ENCODE measurements at regions of chr16 and their contacts with region 1.

Region 1: GRCh38 chr16:79601931-79602627 is 1.5 kb upstream of the MAF start:
- DNase-seq: peak; percentile 92
- H3K4me3 Mint-ChIP-seq: peak overlapping the region; percentile 96
- H3K27ac Mint-ChIP-seq: peak overlapping the region; percentile 98
- H3K4me1 Mint-ChIP-seq: peaks cover 38% of the 10 kb centered on the region
- H3K27me3 Mint-ChIP-seq: peaks cover 3% of the 10 kb centered on the region

Region 2: DNA sequence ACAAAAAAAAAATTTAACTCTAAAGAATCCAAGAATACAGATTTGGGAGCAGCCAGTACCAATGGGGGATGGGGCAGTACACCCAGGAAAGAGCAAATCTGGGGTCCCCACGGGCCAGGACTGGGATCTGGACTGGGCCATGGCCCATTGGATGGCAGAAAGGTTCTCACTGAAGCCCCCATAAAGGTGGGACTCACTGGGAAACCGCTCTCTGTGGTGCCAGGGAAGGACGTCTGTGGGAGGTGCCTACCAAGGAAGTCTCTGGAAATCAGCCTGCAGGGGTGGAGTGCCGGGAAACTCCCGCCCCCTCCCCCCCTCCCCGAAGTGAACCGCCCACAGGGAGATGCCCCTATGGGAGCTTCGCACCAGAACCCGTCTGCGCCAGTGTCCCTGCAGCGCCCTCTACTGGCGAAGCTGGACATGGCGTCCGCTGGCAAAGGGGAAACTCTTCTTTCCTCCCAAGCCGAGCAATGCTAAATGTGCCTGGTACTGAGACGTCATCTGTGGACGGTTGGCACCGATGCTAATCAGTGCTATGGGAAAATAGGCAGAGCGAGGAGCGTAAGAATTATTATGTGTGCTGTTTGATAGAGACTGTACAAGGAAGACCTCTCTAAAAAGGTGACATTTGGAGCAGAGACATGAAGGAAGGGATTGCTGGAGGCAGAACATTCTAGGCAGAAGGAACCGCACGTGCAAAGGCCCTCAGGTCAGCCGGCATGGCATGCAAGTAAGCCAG is 831.6 kb before region 1 on chr16:
- CTCF ChIA-PET with region 1: interaction called, 4 read pairs
- POLR2A ChIA-PET with region 1: interaction called, 14 read pairs
- intact Hi-C with region 1: loop called (anchors 2 kb)
- DNase-seq: peak; percentile 93
- H3K4me3 Mint-ChIP-seq: peak overlapping the region; percentile 65
- H3K27ac Mint-ChIP-seq: peak overlapping the region; percentile 87
- H3K4me1 Mint-ChIP-seq: peaks cover 80% of the 10 kb centered on the region
- H3K27me3 Mint-ChIP-seq: no peaks in the 10 kb centered on the region

Region 3: DNA sequence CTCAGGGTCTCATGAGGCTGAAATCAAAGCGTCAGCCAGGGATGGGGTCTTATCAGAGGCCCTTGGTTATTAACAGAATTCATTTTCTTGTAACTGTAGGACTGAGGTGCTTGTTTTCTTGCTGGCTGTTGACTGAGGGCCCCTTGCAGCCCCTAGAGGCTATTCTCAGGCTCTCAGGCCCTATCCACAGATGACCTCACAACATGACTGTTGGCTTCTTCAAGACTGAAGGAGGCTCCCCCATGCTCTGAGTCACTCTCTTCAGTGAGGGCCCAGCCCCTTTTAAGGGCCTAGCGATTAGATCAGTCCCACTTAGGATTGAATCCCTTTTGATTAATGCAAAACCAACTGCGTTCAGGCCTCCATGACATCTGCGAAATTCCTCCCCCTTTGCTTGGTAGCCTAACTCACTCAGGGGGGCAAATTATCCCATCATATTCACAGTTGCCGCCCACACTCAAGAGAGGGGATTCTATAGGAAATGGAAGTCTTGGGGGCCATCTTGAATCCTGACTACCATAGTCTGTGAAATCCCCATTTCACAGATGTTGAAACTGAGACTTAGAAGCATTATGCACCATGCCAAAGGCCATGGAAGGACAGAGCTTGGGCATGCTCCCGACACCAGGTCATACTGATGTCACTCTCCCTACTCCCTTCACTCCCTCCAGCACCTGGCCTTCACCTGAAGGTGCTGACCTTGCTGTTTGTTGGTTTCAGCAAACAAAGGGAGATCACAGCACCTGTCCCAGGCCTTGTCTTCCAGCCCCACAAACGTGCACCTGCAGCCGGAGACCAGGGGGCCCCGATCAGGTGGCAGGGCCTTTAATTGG is 593.8 kb before region 1 on chr16:
- CTCF ChIA-PET with region 1: no interaction called
- POLR2A ChIA-PET with region 1: interaction called, 12 read pairs
- intact Hi-C with region 1: no loop called
- DNase-seq: peak; percentile 60
- H3K4me3 Mint-ChIP-seq: no peak overlapping the region
- H3K27ac Mint-ChIP-seq: peak overlapping the region; percentile 90
- H3K4me1 Mint-ChIP-seq: peaks cover 45% of the 10 kb centered on the region
- H3K27me3 Mint-ChIP-seq: no peaks in the 10 kb centered on the region

Region 4: DNA sequence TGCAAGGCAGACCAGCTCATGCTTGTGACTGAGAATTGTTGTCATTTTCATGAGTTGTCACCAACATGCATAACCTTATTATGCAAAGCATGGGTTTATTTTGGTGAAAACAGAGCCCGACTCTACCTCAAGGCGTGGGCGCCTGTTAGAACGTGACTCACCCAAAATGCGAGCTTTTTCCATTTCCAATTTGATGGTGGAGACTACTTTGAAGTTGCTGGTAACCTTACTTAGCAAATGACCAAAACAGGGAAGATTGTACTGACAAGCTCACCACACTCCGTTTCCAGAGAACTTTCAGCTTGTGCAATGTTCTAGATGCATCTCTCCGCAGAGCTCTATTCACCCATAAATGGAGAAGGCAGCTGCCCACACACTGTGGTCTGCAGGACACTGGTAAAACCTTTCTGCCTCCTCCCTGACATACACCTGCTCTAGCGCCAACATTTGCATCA is 286.0 kb before region 1 on chr16:
- CTCF ChIA-PET with region 1: interaction called, 3 read pairs
- POLR2A ChIA-PET with region 1: interaction called, 8 read pairs
- intact Hi-C with region 1: loop called (anchors 1 kb)
- DNase-seq: peak; percentile 92
- H3K4me3 Mint-ChIP-seq: peak overlapping the region; percentile 28
- H3K27ac Mint-ChIP-seq: peak overlapping the region; percentile 91
- H3K4me1 Mint-ChIP-seq: peaks cover 37% of the 10 kb centered on the region
- H3K27me3 Mint-ChIP-seq: peaks cover 4% of the 10 kb centered on the region

Region 5: DNA sequence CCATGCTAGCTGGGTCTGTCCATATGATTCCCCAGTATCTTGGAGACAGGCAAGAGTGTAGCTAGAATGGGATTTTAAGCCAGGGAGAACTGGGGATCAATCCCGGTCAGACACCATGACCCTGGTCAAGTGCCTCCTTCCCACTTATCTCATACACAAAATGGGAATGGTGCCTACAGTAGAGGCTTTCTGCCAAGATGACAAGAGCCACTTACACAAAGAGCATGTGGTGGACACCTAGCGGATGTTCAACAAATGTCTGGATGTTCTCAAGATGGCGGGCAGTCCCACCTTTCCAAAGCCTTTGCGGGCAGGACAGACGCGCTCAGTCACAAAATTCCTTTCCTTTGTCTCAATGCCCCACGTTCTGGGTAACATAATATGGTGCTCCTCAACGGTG is 58.9 kb before region 1 on chr16:
- CTCF ChIA-PET with region 1: no interaction called
- POLR2A ChIA-PET with region 1: no interaction called
- intact Hi-C with region 1: no loop called
- DNase-seq: no peak
- H3K4me3 Mint-ChIP-seq: no peak overlapping the region
- H3K27ac Mint-ChIP-seq: no peak overlapping the region
- H3K4me1 Mint-ChIP-seq: no peaks in the 10 kb centered on the region
- H3K27me3 Mint-ChIP-seq: no peaks in the 10 kb centered on the region

Region 6: GRCh38 chr16:79640513-79641355 is 38.7 kb after region 1 on chr16:
- CTCF ChIA-PET with region 1: interaction called, 6 read pairs
- POLR2A ChIA-PET with region 1: interaction called, 3 read pairs
- intact Hi-C with region 1: loop called (anchors 2 kb)
- DNase-seq: no peak
- H3K4me3 Mint-ChIP-seq: no peak overlapping the region
- H3K27ac Mint-ChIP-seq: peak overlapping the region; percentile 50
- H3K4me1 Mint-ChIP-seq: peaks cover 39% of the 10 kb centered on the region
- H3K27me3 Mint-ChIP-seq: no peaks in the 10 kb centered on the region

Region 7: GRCh38 chr16:79691007-79691406 is 88.9 kb after region 1 on chr16:
- CTCF ChIA-PET with region 1: no interaction called
- POLR2A ChIA-PET with region 1: no interaction called
- intact Hi-C with region 1: no loop called
- DNase-seq: no peak
- H3K4me3 Mint-ChIP-seq: no peak overlapping the region
- H3K27ac Mint-ChIP-seq: no peak overlapping the region
- H3K4me1 Mint-ChIP-seq: no peaks in the 10 kb centered on the region
- H3K27me3 Mint-ChIP-seq: peaks cover 4% of the 10 kb centered on the region

Region 8: GRCh38 chr16:79850348-79850747 is 248.3 kb after region 1 on chr16:
- CTCF ChIA-PET with region 1: no interaction called
- POLR2A ChIA-PET with region 1: no interaction called
- intact Hi-C with region 1: no loop called
- DNase-seq: no peak
- H3K4me3 Mint-ChIP-seq: no peak overlapping the region
- H3K27ac Mint-ChIP-seq: no peak overlapping the region
- H3K4me1 Mint-ChIP-seq: peaks cover 11% of the 10 kb centered on the region
- H3K27me3 Mint-ChIP-seq: peaks cover 15% of the 10 kb centered on the region

Region 9: GRCh38 chr16:80084685-80085084 is 482.6 kb after region 1 on chr16:
- CTCF ChIA-PET with region 1: interaction called, 5 read pairs
- POLR2A ChIA-PET with region 1: no interaction called
- intact Hi-C with region 1: loop called (anchors 5 kb)
- DNase-seq: peak; percentile 44
- H3K4me3 Mint-ChIP-seq: no peak overlapping the region
- H3K27ac Mint-ChIP-seq: no peak overlapping the region
- H3K4me1 Mint-ChIP-seq: no peaks in the 10 kb centered on the region
- H3K27me3 Mint-ChIP-seq: no peaks in the 10 kb centered on the region

Measured in activated CD4-positive, alpha-beta memory T cell treated with anti-CD3 and anti-CD28 coated beads for 36 hours (primary cell).